ENCODE measurements at regions of chr7 and their contacts with region 1.

Region 1: DNA sequence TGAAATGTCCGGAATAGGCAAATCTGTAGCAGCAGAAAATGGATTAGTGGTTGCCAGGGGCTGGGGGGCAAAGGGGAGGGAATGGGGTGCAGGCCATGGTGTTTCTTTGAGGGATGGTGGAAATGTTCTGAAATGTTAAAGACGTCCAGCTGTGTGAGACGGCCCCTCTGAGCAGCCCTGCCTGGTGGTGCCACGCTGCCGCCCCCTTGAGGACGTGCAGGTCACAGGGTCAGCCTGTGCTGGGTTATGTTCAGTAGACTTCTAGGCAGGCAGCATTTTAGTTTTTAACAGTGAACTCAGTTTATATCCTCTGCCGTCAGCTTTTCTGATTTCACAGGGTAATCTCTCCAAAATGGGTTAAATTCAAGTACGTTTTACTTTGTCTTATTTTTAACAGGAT is 9.4 kb downstream of the NUB1 start:
- DNase-seq: peak; percentile 68
- H3K4me3 Mint-ChIP-seq: peak overlapping the region; percentile 46
- H3K27ac Mint-ChIP-seq: peak overlapping the region; percentile 95
- H3K4me1 Mint-ChIP-seq: peaks cover 35% of the 10 kb centered on the region
- H3K27me3 Mint-ChIP-seq: no peaks in the 10 kb centered on the region

Region 2: GRCh38 chr7:151057989-151058780 is 292.8 kb before region 1 on chr7:
- CTCF ChIA-PET with region 1: no interaction called
- POLR2A ChIA-PET with region 1: no interaction called
- intact Hi-C with region 1: loop called (anchors 10 kb)
- DNase-seq: peak; percentile 98
- H3K4me3 Mint-ChIP-seq: peak overlapping the region; percentile 89
- H3K27ac Mint-ChIP-seq: peak overlapping the region; percentile 89
- H3K4me1 Mint-ChIP-seq: peaks cover 25% of the 10 kb centered on the region
- H3K27me3 Mint-ChIP-seq: no peaks in the 10 kb centered on the region

Region 3: GRCh38 chr7:151244196-151244840 is 106.7 kb before region 1 on chr7:
- CTCF ChIA-PET with region 1: interaction called, 24 read pairs
- POLR2A ChIA-PET with region 1: no interaction called
- intact Hi-C with region 1: no loop called
- DNase-seq: peak; percentile 78
- H3K4me3 Mint-ChIP-seq: peak overlapping the region; percentile 38
- H3K27ac Mint-ChIP-seq: no peak overlapping the region
- H3K4me1 Mint-ChIP-seq: peaks cover 37% of the 10 kb centered on the region
- H3K27me3 Mint-ChIP-seq: peaks cover 27% of the 10 kb centered on the region

Region 4: GRCh38 chr7:151320263-151320845 is 30.7 kb before region 1 on chr7:
- CTCF ChIA-PET with region 1: interaction called, 161 read pairs
- POLR2A ChIA-PET with region 1: interaction called, 7 read pairs
- intact Hi-C with region 1: loop called (anchors 1 kb)
- DNase-seq: no peak
- H3K4me3 Mint-ChIP-seq: no peak overlapping the region
- H3K27ac Mint-ChIP-seq: no peak overlapping the region
- H3K4me1 Mint-ChIP-seq: no peaks in the 10 kb centered on the region
- H3K27me3 Mint-ChIP-seq: no peaks in the 10 kb centered on the region

Region 5: GRCh38 chr7:151448261-151449252 is 97.5 kb after region 1 on chr7:
- CTCF ChIA-PET with region 1: interaction called, 76 read pairs
- POLR2A ChIA-PET with region 1: no interaction called
- intact Hi-C with region 1: loop called (anchors 5 kb)
- DNase-seq: peak; percentile 82
- H3K4me3 Mint-ChIP-seq: peak overlapping the region; percentile 65
- H3K27ac Mint-ChIP-seq: no peak overlapping the region
- H3K4me1 Mint-ChIP-seq: peaks cover 4% of the 10 kb centered on the region
- H3K27me3 Mint-ChIP-seq: peaks cover 2% of the 10 kb centered on the region

Region 6: DNA sequence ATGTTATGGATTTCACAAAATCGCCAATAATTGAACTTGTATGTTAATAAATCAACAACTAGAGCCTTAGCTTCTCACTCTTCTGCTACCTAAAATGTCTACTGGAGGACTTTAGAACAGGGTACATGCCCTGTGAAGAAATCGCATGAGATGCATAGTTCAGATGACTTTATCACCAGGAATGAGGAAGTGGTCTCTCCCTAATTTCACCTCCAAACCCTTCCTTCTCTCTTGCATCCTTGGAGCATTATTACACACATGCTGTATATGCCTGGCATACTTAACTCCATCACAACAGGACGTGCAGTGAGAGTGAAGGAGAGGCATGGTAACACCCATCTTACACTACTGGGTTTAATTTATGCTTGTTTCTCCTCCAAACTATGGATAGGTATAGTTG is 140.8 kb after region 1 on chr7:
- CTCF ChIA-PET with region 1: no interaction called
- POLR2A ChIA-PET with region 1: no interaction called
- intact Hi-C with region 1: no loop called
- DNase-seq: no peak
- H3K4me3 Mint-ChIP-seq: no peak overlapping the region
- H3K27ac Mint-ChIP-seq: no peak overlapping the region
- H3K4me1 Mint-ChIP-seq: peaks cover 28% of the 10 kb centered on the region
- H3K27me3 Mint-ChIP-seq: no peaks in the 10 kb centered on the region

Region 7: DNA sequence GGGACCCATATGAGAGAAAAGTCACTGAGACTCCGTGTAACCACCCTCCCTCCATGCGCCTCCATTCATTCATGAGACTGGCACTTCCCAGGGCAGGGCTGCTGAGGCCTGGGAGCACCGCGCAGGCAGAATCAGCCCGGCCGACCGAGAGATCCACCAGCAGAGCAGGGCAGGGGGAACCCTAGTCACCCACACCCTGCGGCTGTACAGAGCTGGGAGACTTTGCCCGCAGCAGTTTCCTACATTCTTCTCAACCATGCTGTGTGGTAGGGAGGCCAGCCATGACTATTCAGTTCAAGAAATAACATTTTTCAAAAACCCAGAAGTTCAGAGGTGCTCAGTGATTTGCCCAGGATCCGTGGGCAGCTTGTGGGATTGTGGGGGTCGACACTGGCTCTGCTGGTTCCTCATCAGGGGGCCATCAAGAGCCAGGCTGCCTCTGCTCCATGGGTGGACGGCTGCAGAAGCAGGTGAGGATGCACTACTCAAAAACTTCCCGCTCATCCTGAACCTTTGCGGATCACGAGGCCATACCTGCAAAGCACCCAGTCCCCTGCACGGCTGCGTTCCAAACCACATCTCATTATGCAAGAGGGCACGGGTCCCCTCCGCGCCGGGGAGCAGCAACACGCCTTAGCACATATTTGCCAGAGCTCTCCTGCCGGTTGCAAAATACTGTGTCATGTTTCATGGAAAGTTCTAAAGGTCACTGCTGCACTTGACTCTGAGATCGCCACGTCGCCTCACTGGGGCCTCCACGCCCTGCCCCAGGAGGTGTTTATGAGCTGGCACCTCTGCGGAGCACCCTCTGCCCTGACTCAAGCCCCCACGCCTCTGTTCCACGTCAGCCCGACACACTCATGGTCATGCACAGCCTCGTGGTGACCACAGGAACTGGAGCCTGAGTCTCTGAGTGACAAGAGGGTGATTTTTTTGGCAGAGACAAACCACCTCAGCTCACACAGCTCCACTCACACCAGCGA is 393.9 kb after region 1 on chr7:
- CTCF ChIA-PET with region 1: no interaction called
- POLR2A ChIA-PET with region 1: no interaction called
- intact Hi-C with region 1: loop called (anchors 5 kb)
- DNase-seq: peak; percentile 80
- H3K4me3 Mint-ChIP-seq: no peak overlapping the region
- H3K27ac Mint-ChIP-seq: no peak overlapping the region
- H3K4me1 Mint-ChIP-seq: peaks cover 41% of the 10 kb centered on the region
- H3K27me3 Mint-ChIP-seq: no peaks in the 10 kb centered on the region

Region 8: GRCh38 chr7:151925446-151926335 is 574.7 kb after region 1 on chr7:
- CTCF ChIA-PET with region 1: no interaction called
- POLR2A ChIA-PET with region 1: no interaction called
- intact Hi-C with region 1: no loop called
- DNase-seq: peak; percentile 56
- H3K4me3 Mint-ChIP-seq: no peak overlapping the region
- H3K27ac Mint-ChIP-seq: peak overlapping the region; percentile 76
- H3K4me1 Mint-ChIP-seq: peaks cover 19% of the 10 kb centered on the region
- H3K27me3 Mint-ChIP-seq: peaks cover 23% of the 10 kb centered on the region

Region 9: DNA sequence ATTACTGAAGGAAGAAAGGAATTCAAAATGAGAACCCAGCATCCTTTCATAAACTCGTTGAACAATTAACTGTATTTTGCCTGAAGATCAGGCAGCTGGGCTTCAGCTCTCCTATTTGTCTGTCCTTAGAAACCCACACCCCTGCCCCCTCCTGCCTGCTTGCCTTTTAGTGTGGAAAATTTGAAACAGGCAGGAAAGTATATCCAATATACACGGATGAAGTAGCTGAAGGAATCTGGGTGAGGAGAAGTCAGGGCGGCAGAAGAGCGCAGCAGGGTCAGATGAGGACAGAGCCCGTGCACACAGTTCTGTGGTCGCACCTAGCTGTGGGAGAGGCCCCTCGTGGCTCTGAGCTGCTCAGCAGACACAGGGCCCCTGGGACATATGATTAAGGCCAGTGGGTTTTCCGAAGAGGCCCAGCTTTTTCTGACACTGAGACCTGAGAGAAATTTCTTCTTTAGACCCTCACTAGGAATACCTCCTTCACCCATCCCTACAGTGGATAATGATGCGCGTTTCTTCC is 1496.4 kb after region 1 on chr7:
- CTCF ChIA-PET with region 1: no interaction called
- POLR2A ChIA-PET with region 1: no interaction called
- intact Hi-C with region 1: no loop called
- DNase-seq: no peak
- H3K4me3 Mint-ChIP-seq: no peak overlapping the region
- H3K27ac Mint-ChIP-seq: no peak overlapping the region
- H3K4me1 Mint-ChIP-seq: no peaks in the 10 kb centered on the region
- H3K27me3 Mint-ChIP-seq: no peaks in the 10 kb centered on the region